H1 (cell line): ENCODE measurements at regions of chr3 and their contacts with region 1.

Region 1: DNA sequence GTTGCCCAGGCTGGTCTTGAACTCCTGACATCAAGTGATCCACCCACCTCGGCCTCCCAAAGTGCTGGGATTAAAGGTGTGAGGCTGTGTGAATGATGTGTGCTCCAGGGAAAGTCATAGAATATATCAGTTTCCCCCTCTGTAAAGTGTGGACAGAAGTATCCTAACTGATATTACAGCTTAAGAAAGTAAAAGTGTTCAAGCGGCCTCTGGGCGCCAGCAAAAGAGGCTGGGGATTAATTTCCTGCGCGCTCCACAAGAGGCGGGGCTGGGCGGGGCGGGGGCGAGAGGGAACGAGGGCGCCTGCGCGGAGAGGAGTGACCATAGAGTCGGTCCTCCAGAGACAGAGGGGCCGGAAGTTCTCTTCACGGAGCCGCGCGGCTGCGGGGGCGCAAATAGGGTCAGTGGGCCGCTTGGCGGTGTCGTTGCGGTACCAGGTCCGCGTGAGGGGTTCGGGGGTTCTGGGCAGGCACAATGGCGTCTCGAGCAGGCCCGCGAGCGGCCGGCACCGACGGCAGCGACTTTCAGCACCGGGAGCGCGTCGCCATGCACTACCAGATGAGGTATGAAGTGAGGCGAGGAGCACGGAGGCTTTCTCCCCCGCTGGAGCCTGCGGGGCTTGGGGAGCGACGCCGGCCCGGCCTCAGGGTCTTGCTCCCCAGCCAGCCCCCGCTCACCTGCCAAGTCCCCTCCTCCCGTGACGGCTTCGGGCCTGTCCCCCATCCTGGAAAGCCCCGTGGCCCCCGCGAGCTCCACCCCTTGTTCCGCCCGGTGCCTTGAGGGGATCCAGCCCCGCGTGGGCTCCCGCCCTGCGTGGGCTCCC is at the start of gene JAGN1:
- DNase-seq: peak; percentile 64 to 97
- H3K4me3 ChIP-seq: peak within 1 kb of the TSS; percentile 88 to 98 (median 90)
- H3K27ac ChIP-seq: peak within 1 kb of the TSS; percentile 89
- H3K4me1 ChIP-seq: peaks cover 0 to 2% (median 0%) of the 10 kb centered on the region in 4 experiments; a peak in 1 of 7 replicates
- H3K27me3 ChIP-seq: no peaks in the 10 kb centered on the region
- CTCF ChIP-seq: no peak
- EP300 ChIP-seq: no peak
- POLR2A ChIP-seq: peak; percentile 92 to 95
- RAD21 ChIP-seq: no peak
- total RNA-seq, gene JAGN1: 26.8 and 26.9 TPM in 2 replicates

Region 2: DNA sequence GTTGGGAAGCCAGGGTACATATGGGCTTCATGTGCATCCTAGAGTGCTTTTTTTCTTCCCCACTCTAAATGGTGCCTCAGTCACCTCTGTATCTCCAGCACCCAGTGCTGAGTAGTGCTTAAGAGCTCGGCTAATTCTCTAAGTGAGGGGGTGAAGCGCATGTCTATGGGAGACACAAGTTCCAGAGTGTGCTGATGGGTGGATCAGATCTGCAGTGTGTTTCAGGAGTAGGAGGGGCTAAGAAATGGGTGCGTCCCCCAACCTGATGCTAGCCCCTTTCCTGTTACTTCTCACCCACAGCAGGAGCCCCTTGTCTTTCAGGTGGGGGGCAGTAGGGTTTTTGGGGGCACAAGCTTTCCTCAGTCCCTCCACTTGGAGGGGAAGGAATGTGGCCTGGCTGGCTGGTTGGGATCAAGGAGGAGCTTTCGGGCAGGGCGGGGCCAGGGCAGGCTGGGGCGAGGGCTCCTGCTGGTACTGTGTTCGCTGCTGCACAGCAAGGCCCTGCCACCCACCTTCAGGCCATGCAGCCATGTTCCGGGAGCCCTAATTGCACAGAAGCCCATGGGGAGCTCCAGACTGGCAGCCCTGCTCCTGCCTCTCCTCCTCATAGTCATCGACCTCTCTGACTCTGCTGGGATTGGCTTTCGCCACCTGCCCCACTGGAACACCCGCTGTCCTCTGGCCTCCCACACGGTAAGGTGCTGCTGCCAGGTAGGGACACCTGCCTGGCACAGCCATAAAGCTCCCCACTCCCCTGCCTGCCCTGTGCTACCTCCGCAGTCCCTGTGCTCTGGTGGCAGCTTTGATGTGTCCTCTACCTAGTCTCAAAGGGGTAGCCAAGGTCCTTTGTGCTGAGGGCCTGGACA is 12.1 kb after region 1 on chr3 and contains the start of gene IL17RE:
- CTCF ChIA-PET with region 1: interaction called, 9 read pairs
- POLR2A ChIA-PET with region 1: interaction called, 11 read pairs
- DNase-seq: peak in 1 of 2 experiments; percentile 73
- H3K4me3 ChIP-seq: peak within 1 kb of the TSS in 2 of 4 experiments; percentile 2 to 30; a peak in 2 of 8 replicates
- H3K27ac ChIP-seq: no peak within 1 kb of the TSS
- H3K4me1 ChIP-seq: peaks cover 5 to 14% (median 11%) of the 10 kb centered on the region in 4 experiments
- H3K27me3 ChIP-seq: no peaks in the 10 kb centered on the region
- CTCF ChIP-seq: no peak
- EP300 ChIP-seq: no peak
- POLR2A ChIP-seq: 0 out of 3 replicates have a peak, but pooled peaks of 1 of the 2 experiments have one; percentile 17
- RAD21 ChIP-seq: no peak
- total RNA-seq, gene IL17RE: 4.4 and 4.9 TPM in 2 replicates